Right cardiac atrium (tissue), 5 donors: ENCODE measurements at regions of chr4 and their contacts with region 1.

Region 1: DNA sequence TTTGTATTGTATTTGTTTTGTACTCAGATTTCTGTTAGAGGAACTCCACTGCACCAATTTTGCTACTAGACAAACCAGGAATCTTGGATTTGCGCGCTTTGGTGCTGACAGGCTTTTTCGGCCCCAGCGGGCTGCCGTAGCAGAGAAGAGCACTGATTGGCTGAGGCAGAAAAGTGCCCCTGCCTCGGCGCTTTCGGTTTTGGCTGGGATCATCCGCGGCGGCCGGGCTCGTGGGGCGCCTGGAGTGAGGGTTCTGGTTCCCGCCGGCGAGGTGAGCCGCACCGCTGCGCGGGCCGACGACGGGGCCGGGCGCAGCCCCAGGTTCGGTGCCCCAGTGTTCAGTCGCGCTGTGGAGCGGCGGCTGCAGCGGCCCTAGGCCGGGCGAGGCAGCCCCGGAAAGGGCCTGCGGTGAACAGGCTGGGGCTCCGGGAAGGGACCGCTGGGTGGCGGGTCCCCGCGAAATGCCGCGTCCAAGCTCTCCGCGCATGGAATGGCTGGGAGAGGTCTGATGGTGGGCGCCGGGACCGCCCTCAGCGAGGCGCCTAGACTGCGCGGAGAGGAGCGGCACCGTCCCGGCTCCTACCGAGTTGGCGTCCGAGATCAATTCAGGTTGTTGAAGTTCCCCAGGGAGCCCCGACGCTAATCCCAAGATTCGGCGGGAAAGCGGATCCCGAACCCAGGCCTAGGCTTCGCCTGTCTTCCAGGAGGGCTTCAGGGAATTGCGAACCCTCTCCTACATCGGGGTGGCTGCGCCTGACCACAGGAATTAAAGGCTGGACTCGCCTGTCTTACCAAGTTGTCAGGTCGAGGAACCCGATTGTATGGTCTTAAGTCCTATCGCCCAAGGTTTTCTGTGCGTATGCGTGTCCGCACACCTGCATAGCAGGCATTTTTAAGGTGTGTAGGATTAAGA is at the start of gene LSM6:
- DNase-seq: peak; percentile 89 to 94 (median 93)
- ATAC-seq: peak; percentile 98 to 99
- H3K4me3 ChIP-seq: peak within 1 kb of the TSS; percentile 61
- H3K27ac ChIP-seq: peak within 1 kb of the TSS; percentile 59
- H3K4me1 ChIP-seq: peaks cover 14% of the 10 kb centered on the region
- H3K27me3 ChIP-seq: no peaks in the 10 kb centered on the region
- total RNA-seq, gene LSM6: 13.9 to 19.9 (median 16.4) TPM

Region 2: DNA sequence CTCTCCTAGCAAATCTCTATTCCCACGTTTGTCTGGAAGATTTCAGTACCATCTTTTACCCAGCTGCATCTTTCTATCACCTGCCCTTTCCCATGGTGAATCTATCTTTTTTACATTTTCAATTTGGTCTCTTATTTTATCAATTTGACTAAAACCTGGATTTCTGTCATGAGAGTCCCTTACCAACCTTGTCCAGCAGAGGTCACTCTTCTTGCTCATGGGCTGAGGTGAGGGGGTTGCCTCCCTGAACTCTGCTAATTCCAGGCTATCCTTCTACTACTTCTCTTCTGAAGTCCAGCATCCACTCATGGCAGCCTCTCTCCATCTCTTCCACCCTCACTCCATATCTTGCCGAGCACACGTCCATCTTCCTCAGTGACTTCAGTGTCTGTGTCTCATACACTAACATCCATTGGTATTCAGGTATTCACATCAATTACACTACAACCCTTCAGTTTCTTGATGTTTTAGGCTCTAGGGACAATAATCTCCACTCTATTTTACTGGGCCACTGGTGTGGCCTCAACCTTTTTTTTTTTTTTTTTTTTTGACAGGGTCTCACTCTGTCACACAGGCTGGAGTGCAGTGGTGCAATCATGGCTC is 219.4 kb before region 1 on chr4:
- intact Hi-C with region 1: loop called in 1 of 4 experiments (anchors 10 kb)
- DNase-seq: no peak
- ATAC-seq: no peak
- H3K4me3 ChIP-seq: no peak overlapping the region
- H3K27ac ChIP-seq: no peak overlapping the region
- H3K4me1 ChIP-seq: no peaks in the 10 kb centered on the region
- H3K27me3 ChIP-seq: no peaks in the 10 kb centered on the region